ENCODE measurements at regions of chr7 and their contacts with region 1.

Region 1: GRCh38 chr7:130010689-130011412 is 40.3 kb downstream of the ZC3HC1 start:
- DNase-seq: peak; percentile 84 to 93 (median 87)
- ATAC-seq: peak; percentile 72
- H3K4me3 ChIP-seq: no peak overlapping the region
- H3K27ac ChIP-seq: peak overlapping the region; percentile 73; the same call in 2 of the 3 replicates
- H3K4me1 ChIP-seq: peaks cover 15 to 19% of the 10 kb centered on the region in 2 experiments
- H3K27me3 ChIP-seq: no peaks in the 10 kb centered on the region
- CTCF ChIP-seq: peak; percentile 95 to 98 (median 97)
- EP300 ChIP-seq: no peak
- POLR2A ChIP-seq: no peak
- RAD21 ChIP-seq: peak; percentile 97 to 98

Region 2: GRCh38 chr7:129494041-129494440 is 516.8 kb before region 1 on chr7:
- CTCF ChIA-PET with region 1: no interaction called
- POLR2A ChIA-PET with region 1: no interaction called
- in situ Hi-C with region 1: no loop called
- intact Hi-C with region 1: loop called (anchors 10 kb)
- DNase-seq: no peak
- ATAC-seq: no peak
- H3K4me3 ChIP-seq: no peak overlapping the region
- H3K27ac ChIP-seq: no peak overlapping the region
- H3K4me1 ChIP-seq: no peaks in the 10 kb centered on the region; a peak in 1 of 5 replicates
- H3K27me3 ChIP-seq: no peaks in the 10 kb centered on the region
- CTCF ChIP-seq: no peak
- EP300 ChIP-seq: no peak
- POLR2A ChIP-seq: no peak
- RAD21 ChIP-seq: no peak

Region 3: DNA sequence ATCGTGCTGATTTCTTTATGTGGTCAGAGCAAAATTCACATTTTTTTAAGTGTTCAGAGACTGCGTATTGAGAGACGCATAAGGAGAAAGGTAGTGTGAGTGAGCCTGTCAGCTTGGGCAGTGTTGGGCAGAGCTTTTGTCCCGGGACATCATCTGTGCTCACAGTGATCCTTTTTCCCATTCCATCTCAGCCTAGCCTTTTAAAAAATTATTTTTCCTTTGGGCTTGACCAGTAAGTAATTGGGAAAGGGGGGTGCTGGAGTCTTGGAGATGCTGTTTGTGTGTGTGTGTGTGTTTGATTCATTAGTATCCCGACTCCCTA is 397.9 kb before region 1 on chr7:
- CTCF ChIA-PET with region 1: no interaction called
- POLR2A ChIA-PET with region 1: no interaction called
- in situ Hi-C with region 1: no loop called
- intact Hi-C with region 1: no loop called
- DNase-seq: no peak
- ATAC-seq: no peak
- H3K4me3 ChIP-seq: peak overlapping the region; percentile 78
- H3K27ac ChIP-seq: 0 out of 3 replicates have a peak overlapping the region, but pooled peaks have one; percentile 93
- H3K4me1 ChIP-seq: peaks cover 18 to 46% of the 10 kb centered on the region in 2 experiments
- H3K27me3 ChIP-seq: no peaks in the 10 kb centered on the region
- CTCF ChIP-seq: no peak
- EP300 ChIP-seq: no peak
- POLR2A ChIP-seq: no peak
- RAD21 ChIP-seq: no peak

Region 4: GRCh38 chr7:129664029-129665012 is 346.5 kb before region 1 on chr7:
- CTCF ChIA-PET with region 1: interaction called, 27 read pairs
- POLR2A ChIA-PET with region 1: no interaction called
- in situ Hi-C with region 1: loop called (anchors 5 kb)
- intact Hi-C with region 1: loop called (anchors 1 kb)
- DNase-seq: peak; percentile 56 to 76 (median 65)
- ATAC-seq: peak; percentile 93
- H3K4me3 ChIP-seq: no peak overlapping the region
- H3K27ac ChIP-seq: no peak overlapping the region
- H3K4me1 ChIP-seq: no peaks in the 10 kb centered on the region
- H3K27me3 ChIP-seq: no peaks in the 10 kb centered on the region
- CTCF ChIP-seq: peak; percentile 71 to 97 (median 74); a peak in 5 of 6 replicates
- EP300 ChIP-seq: no peak
- POLR2A ChIP-seq: no peak
- RAD21 ChIP-seq: peak; percentile 98 to 100

Region 5: DNA sequence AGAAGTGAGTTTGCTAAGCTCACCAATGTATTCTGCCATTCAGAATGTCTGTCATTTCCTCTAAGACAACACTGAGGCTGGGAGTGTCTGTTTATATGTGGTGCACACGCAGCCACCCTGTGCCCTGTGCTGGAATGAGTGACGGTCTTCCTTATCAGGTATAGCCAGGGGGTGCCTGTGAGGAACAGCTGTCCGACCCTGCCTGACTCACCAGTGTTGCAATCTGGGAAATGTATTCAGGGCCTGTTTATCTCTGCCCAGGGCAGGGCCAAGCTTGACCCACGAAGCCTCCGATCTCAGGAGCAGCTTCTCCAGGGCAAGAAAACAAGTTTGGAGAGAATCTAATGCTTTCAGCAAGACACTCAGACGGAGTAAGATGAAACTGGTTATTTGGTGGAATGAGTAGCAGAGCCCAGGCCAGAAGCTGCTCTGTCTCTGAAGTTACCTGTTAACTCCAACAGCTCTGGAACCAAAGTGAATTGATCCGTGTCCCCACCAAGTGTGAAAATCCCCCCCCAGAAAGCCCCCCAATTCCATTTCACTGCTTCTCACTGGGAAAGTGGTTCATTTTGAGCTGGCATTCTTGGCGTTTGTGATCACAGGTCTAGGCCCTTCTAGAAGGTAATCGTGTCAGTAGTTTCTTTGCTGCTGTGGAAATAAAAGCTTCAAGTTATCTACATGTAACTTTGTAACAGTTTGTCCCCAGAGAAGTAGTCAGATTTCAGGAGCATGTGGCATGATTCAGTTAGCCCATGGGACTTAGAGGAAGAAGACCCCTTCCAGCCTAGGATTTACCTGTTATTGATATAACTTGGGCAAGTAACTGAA is 52.0 kb before region 1 on chr7:
- CTCF ChIA-PET with region 1: no interaction called
- POLR2A ChIA-PET with region 1: interaction called, 4 read pairs
- in situ Hi-C with region 1: no loop called
- intact Hi-C with region 1: loop called (anchors 1 kb)
- DNase-seq: peak; percentile 95 to 99 (median 97)
- ATAC-seq: peak; percentile 97
- H3K4me3 ChIP-seq: no peak overlapping the region
- H3K27ac ChIP-seq: peak overlapping the region; percentile 43; the same call in 2 of the 3 replicates
- H3K4me1 ChIP-seq: peaks cover 20 to 31% of the 10 kb centered on the region in 2 experiments
- H3K27me3 ChIP-seq: no peaks in the 10 kb centered on the region
- CTCF ChIP-seq: 0 out of 6 replicates have a peak, but pooled peaks of 2 of the 3 experiments have one; percentile 2 to 8
- EP300 ChIP-seq: peak; percentile 99
- POLR2A ChIP-seq: no peak
- RAD21 ChIP-seq: peak; percentile 28 to 57; a peak in 3 of 4 replicates

Measured in K562 (cell line).